HCT116 (cell line): ENCODE measurements at regions of chr11 and their contacts with region 1.

Region 1: GRCh38 chr11:10490398-10491241 is 35.6 kb downstream of the AMPD3 start:
- DNase-seq: peak; percentile 94
- ATAC-seq: peak; percentile 69
- H3K4me3 ChIP-seq: peak overlapping the region in 1 of 2 experiments; percentile 14; a peak in 2 of 4 replicates
- H3K27ac ChIP-seq: peak overlapping the region; percentile 79
- H3K4me1 ChIP-seq: peaks cover 48 to 66% of the 10 kb centered on the region in 2 experiments
- H3K27me3 ChIP-seq: no peaks in the 10 kb centered on the region
- CTCF ChIP-seq: no peak
- POLR2A ChIP-seq: no peak
- RAD21 ChIP-seq: 0 out of 2 replicates have a peak, but pooled peaks have one; percentile 30

Region 2: DNA sequence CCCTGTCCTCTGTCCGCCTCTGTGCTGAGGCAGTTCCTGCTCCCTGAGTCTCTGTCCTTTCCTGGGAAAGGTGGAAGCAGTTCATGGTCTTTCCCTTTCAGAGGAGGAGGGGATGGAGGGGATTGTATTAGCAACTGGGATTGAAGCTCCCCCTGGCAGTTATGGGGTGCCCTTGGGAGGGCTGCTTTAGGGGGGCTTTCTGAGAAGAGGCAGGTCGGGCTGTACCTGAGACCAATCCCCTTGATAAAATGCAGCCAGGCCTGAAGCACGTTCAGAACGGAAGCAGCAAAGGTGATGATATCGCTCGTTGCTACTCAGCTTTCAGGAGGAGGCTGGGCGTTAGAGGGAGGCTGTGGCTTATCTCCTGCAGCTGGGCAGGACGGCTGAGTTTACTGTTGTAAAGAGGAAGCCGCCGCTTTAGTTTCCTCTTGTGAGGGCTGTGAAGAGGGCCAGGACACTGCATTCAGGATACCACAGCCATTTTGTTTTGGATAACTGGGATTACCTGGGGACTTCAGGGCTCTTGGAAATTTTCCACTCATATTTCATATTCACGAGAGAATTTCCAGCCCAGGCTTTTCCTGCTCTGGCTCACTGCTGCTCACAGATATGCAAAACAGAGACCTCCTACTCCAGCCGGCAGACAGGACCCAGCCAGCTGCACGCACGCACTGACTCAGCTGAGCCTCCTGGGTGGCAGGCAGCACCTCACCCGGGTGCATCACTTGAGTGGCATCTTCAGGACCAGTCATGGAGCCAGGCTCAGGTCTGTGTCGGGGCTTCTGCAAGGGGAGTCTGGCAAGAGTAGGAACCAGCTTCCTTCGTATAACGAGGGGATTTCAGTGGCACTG is 34.8 kb before region 1 on chr11:
- CTCF ChIA-PET with region 1: no interaction called
- POLR2A ChIA-PET with region 1: interaction called, 11 read pairs
- RAD21 ChIA-PET with region 1: no interaction called
- intact Hi-C with region 1: no loop called
- DNase-seq: peak; percentile 26
- ATAC-seq: peak; percentile 64
- H3K4me3 ChIP-seq: peak overlapping the region; percentile 62 to 71
- H3K27ac ChIP-seq: peak overlapping the region; percentile 77
- H3K4me1 ChIP-seq: peaks cover 36 to 65% of the 10 kb centered on the region in 2 experiments
- H3K27me3 ChIP-seq: no peaks in the 10 kb centered on the region
- CTCF ChIP-seq: no peak
- POLR2A ChIP-seq: no peak
- RAD21 ChIP-seq: no peak